Endothelial cell of umbilical vein (primary cell): ENCODE measurements at regions of chr5 and their contacts with region 1.

Region 1: GRCh38 chr5:132064738-132065331 is 4.4 kb downstream of the IL3 start:
- DNase-seq: peak; percentile 78
- H3K4me3 ChIP-seq: no peak overlapping the region
- H3K27ac ChIP-seq: no peak overlapping the region
- H3K4me1 ChIP-seq: no peaks in the 10 kb centered on the region
- H3K27me3 ChIP-seq: no peaks in the 10 kb centered on the region
- CTCF ChIP-seq: peak; percentile 93 to 97
- POLR2A ChIP-seq: no peak

Region 2: GRCh38 chr5:131423056-131423455 is 641.8 kb before region 1 on chr5:
- CTCF ChIA-PET with region 1: interaction called, 24 read pairs
- POLR2A ChIA-PET with region 1: no interaction called
- dilution Hi-C with region 1: no loop called
- intact Hi-C with region 1: loop called (anchors 1 kb)
- DNase-seq: peak; percentile 46
- H3K4me3 ChIP-seq: no peak overlapping the region
- H3K27ac ChIP-seq: no peak overlapping the region
- H3K4me1 ChIP-seq: no peaks in the 10 kb centered on the region
- H3K27me3 ChIP-seq: no peaks in the 10 kb centered on the region
- CTCF ChIP-seq: peak; percentile 47 to 56
- POLR2A ChIP-seq: no peak

Region 3: GRCh38 chr5:132086277-132086794 is 21.5 kb after region 1 on chr5:
- CTCF ChIA-PET with region 1: interaction called, 12 read pairs
- POLR2A ChIA-PET with region 1: no interaction called
- dilution Hi-C with region 1: no loop called
- intact Hi-C with region 1: loop called (anchors 1 kb)
- DNase-seq: peak; percentile 99
- H3K4me3 ChIP-seq: no peak overlapping the region
- H3K27ac ChIP-seq: peak overlapping the region; percentile 91
- H3K4me1 ChIP-seq: peaks cover 26% of the 10 kb centered on the region
- H3K27me3 ChIP-seq: no peaks in the 10 kb centered on the region
- CTCF ChIP-seq: no peak
- POLR2A ChIP-seq: no peak

Region 4: GRCh38 chr5:132180134-132180745 is 115.4 kb after region 1 on chr5:
- CTCF ChIA-PET with region 1: interaction called, 23 read pairs
- POLR2A ChIA-PET with region 1: no interaction called
- dilution Hi-C with region 1: no loop called
- intact Hi-C with region 1: loop called (anchors 1 kb)
- DNase-seq: peak; percentile 78
- H3K4me3 ChIP-seq: no peak overlapping the region
- H3K27ac ChIP-seq: no peak overlapping the region
- H3K4me1 ChIP-seq: peaks cover 16% of the 10 kb centered on the region
- H3K27me3 ChIP-seq: no peaks in the 10 kb centered on the region
- CTCF ChIP-seq: peak; percentile 70 to 74
- POLR2A ChIP-seq: no peak

Region 5: GRCh38 chr5:132238169-132238744 is 173.4 kb after region 1 on chr5:
- CTCF ChIA-PET with region 1: interaction called, 11 read pairs
- POLR2A ChIA-PET with region 1: no interaction called
- dilution Hi-C with region 1: no loop called
- intact Hi-C with region 1: loop called (anchors 1 kb)
- DNase-seq: peak; percentile 69
- H3K4me3 ChIP-seq: no peak overlapping the region
- H3K27ac ChIP-seq: no peak overlapping the region
- H3K4me1 ChIP-seq: no peaks in the 10 kb centered on the region
- H3K27me3 ChIP-seq: no peaks in the 10 kb centered on the region
- CTCF ChIP-seq: peak; percentile 71 to 84
- POLR2A ChIP-seq: no peak

Region 6: GRCh38 chr5:132369474-132370180 is 304.8 kb after region 1 on chr5 and contains the start of gene SLC22A5:
- CTCF ChIA-PET with region 1: interaction called, 3 read pairs
- POLR2A ChIA-PET with region 1: no interaction called
- dilution Hi-C with region 1: no loop called
- intact Hi-C with region 1: loop called (anchors 1 kb)
- DNase-seq: peak; percentile 70
- H3K4me3 ChIP-seq: peak within 1 kb of the TSS; percentile 59 to 61 (median 61)
- H3K27ac ChIP-seq: peak within 1 kb of the TSS; percentile 2
- H3K4me1 ChIP-seq: peaks cover 5% of the 10 kb centered on the region
- H3K27me3 ChIP-seq: no peaks in the 10 kb centered on the region
- CTCF ChIP-seq: no peak
- POLR2A ChIP-seq: peak; percentile 28
- total RNA-seq, gene SLC22A5: 3.6 and 3.8 TPM in 2 replicates

Region 7: GRCh38 chr5:133179405-133179804 is 1114.6 kb after region 1 on chr5:
- CTCF ChIA-PET with region 1: no interaction called
- POLR2A ChIA-PET with region 1: no interaction called
- dilution Hi-C with region 1: no loop called
- intact Hi-C with region 1: no loop called
- DNase-seq: no peak
- H3K4me3 ChIP-seq: no peak overlapping the region
- H3K27ac ChIP-seq: no peak overlapping the region
- H3K4me1 ChIP-seq: no peaks in the 10 kb centered on the region
- H3K27me3 ChIP-seq: no peaks in the 10 kb centered on the region
- CTCF ChIP-seq: no peak
- POLR2A ChIP-seq: no peak